Sigmoid colon (tissue), 7 donors: ENCODE measurements at regions of chr7 and their contacts with region 1.

Region 1: DNA sequence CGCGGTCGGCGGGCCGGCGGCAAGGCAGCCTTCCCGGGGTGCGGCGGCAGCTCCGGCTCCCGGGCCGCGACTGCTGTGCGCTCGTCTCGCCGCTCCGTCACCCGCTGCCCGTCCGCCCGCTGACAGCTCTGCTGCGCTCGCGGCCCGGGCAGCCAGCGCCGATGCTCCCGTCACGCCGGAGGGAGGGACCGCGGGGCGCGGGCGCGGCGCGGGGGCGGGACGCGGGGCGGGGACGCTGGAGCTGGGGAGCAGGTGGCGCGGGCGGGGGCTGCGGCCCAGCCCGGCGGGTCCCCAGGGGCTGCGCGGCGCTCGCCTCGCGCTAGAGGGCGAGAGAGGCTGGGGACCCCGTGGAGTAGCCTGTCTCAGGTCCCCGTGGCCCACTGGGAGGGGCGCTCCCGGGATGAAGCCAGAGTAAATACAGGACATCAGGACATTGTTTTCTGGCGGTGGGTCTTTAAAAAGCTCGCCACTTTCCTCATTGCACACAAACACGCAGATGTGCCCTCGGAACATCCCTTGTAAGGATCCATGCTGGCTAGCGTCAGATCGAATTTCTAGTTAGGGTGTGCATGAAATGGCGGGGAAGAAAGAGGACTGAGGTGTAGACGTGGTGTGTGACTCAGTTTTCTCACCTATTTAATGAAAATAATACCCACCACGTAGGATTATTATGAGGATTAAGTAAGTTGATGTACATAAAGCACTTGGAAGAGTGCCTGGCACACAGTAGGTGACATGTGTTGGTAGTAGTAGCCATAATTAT is at the start of gene ELAPOR2:
- DNase-seq: peak; percentile 86
- H3K4me3 ChIP-seq: peak within 1 kb of the TSS; percentile 43 to 81 (median 64)
- H3K27ac ChIP-seq: peak within 1 kb of the TSS; percentile 56 to 74 (median 61)
- H3K4me1 ChIP-seq: peaks cover 0 to 13% (median 12%) of the 10 kb centered on the region in 4 donors
- H3K27me3 ChIP-seq: no peaks in the 10 kb centered on the region
- CTCF ChIP-seq: peak in 1 of 4 experiments; percentile 32
- EP300 ChIP-seq: no peak
- POLR2A ChIP-seq: no peak
- total RNA-seq, gene ELAPOR2: 7.3 to 15.3 (median 8.9) TPM

Region 2: GRCh38 chr7:86939197-86939814 is 120.4 kb before region 1 on chr7:
- intact Hi-C with region 1: loop called (anchors 5 kb)
- DNase-seq: no peak
- H3K4me3 ChIP-seq: no peak overlapping the region
- H3K27ac ChIP-seq: no peak overlapping the region
- H3K4me1 ChIP-seq: no peaks in the 10 kb centered on the region
- H3K27me3 ChIP-seq: no peaks in the 10 kb centered on the region
- CTCF ChIP-seq: peak; percentile 27 to 76 (median 56)
- EP300 ChIP-seq: no peak
- POLR2A ChIP-seq: no peak

Region 3: DNA sequence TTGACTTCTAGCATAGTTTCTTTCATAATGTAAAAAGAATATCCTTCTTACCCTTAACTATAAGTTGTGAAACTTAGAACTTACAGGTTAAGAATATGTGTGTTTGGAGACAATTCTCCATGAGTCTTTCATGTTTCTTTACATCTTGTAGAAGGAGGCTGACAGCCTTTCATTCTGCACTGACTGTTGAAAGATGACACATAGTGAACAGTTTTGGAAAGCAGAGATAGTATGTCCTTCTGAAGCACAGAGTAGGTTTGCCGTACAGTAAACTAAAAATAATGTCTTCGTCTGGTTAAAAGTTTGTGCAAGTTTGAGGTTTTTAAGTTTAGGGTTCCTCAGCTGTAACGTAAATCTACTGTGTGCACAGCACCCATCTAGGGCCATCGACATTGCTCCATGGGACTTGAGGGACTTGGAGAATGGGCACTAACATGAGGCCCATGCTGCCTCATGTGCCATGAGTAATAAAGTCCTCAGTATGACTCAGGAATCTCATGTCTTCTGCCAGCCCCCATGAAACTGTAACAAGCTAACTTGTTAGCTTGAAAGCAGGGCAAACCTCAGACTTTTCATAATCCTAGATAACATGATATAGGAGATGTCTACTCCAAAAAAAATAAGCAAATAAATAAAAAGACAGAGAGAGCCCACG is 24.3 kb after region 1 on chr7:
- intact Hi-C with region 1: no loop called
- DNase-seq: no peak
- H3K4me3 ChIP-seq: no peak overlapping the region
- H3K27ac ChIP-seq: no peak overlapping the region
- H3K4me1 ChIP-seq: no peaks in the 10 kb centered on the region
- H3K27me3 ChIP-seq: no peaks in the 10 kb centered on the region
- CTCF ChIP-seq: no peak
- EP300 ChIP-seq: no peak
- POLR2A ChIP-seq: no peak

Region 4: GRCh38 chr7:87219545-87220025 is 159.9 kb after region 1 on chr7 and contains the start of gene TMEM243:
- intact Hi-C with region 1: loop called (anchors 1 kb)
- DNase-seq: peak; percentile 86
- H3K4me3 ChIP-seq: peak within 1 kb of the TSS; percentile 75 to 86 (median 84)
- H3K27ac ChIP-seq: peak within 1 kb of the TSS; percentile 83 to 86 (median 85)
- H3K4me1 ChIP-seq: peaks cover 0 to 32% (median 17%) of the 10 kb centered on the region in 4 donors
- H3K27me3 ChIP-seq: no peaks in the 10 kb centered on the region
- CTCF ChIP-seq: no peak
- EP300 ChIP-seq: no peak
- POLR2A ChIP-seq: peak in 1 of 2 donors; percentile 25
- total RNA-seq, gene TMEM243: 26.9 to 37.7 (median 30.4) TPM